B cell (primary cell): ENCODE measurements at regions of chr2 and their contacts with region 1.

Region 1: GRCh38 chr2:130342533-130343275 is at the start of gene IMP4:
- DNase-seq: peak; percentile 98
- ATAC-seq: peak; percentile 83
- H3K4me3 ChIP-seq: peak within 1 kb of the TSS; percentile 87 to 99 (median 89)
- H3K4me3 Mint-ChIP-seq: peak within 1 kb of the TSS; percentile 100
- H3K27ac ChIP-seq: peak within 1 kb of the TSS; percentile 90 to 97
- H3K27ac Mint-ChIP-seq: peak within 1 kb of the TSS; percentile 99
- H3K4me1 ChIP-seq: peaks cover 12 to 30% of the 10 kb centered on the region in 2 donors
- H3K4me1 Mint-ChIP-seq: peaks cover 53% of the 10 kb centered on the region
- H3K27me3 ChIP-seq: no peaks in the 10 kb centered on the region
- H3K27me3 Mint-ChIP-seq: no peaks in the 10 kb centered on the region
- CTCF ChIP-seq: peak; percentile 53
- total RNA-seq, gene IMP4: 91.5 and 102 TPM in 2 replicates

Region 2: GRCh38 chr2:130154773-130155765 is 187.6 kb before region 1 on chr2:
- CTCF ChIA-PET with region 1: interaction called, 8 read pairs
- POLR2A ChIA-PET with region 1: no interaction called
- intact Hi-C with region 1: loop called (anchors 1 kb)
- DNase-seq: no peak
- ATAC-seq: no peak
- H3K4me3 ChIP-seq: no peak overlapping the region
- H3K4me3 Mint-ChIP-seq: no peak overlapping the region
- H3K27ac ChIP-seq: no peak overlapping the region
- H3K27ac Mint-ChIP-seq: peak overlapping the region; percentile 46
- H3K4me1 ChIP-seq: peaks cover 24 to 32% of the 10 kb centered on the region in 2 donors
- H3K4me1 Mint-ChIP-seq: peaks cover 30% of the 10 kb centered on the region
- H3K27me3 ChIP-seq: no peaks in the 10 kb centered on the region
- H3K27me3 Mint-ChIP-seq: no peaks in the 10 kb centered on the region
- CTCF ChIP-seq: no peak

Region 3: GRCh38 chr2:130332271-130333073 is 10.2 kb before region 1 on chr2:
- CTCF ChIA-PET with region 1: interaction called, 40 read pairs
- POLR2A ChIA-PET with region 1: no interaction called
- intact Hi-C with region 1: no loop called
- DNase-seq: peak; percentile 75
- ATAC-seq: peak; percentile 86
- H3K4me3 ChIP-seq: peak overlapping the region in 1 of 5 experiments; percentile 4
- H3K4me3 Mint-ChIP-seq: peak overlapping the region; percentile 26
- H3K27ac ChIP-seq: no peak overlapping the region
- H3K27ac Mint-ChIP-seq: no peak overlapping the region
- H3K4me1 ChIP-seq: peaks cover 4 to 7% of the 10 kb centered on the region in 2 donors
- H3K4me1 Mint-ChIP-seq: peaks cover 6% of the 10 kb centered on the region
- H3K27me3 ChIP-seq: peaks cover 0 to 16% (median 4%) of the 10 kb centered on the region in 4 experiments
- H3K27me3 Mint-ChIP-seq: peaks cover 25% of the 10 kb centered on the region
- CTCF ChIP-seq: peak; percentile 98

Region 4: GRCh38 chr2:130372055-130372832 is 29.5 kb after region 1 on chr2:
- CTCF ChIA-PET with region 1: interaction called, 61 read pairs
- POLR2A ChIA-PET with region 1: interaction called, 27 read pairs
- intact Hi-C with region 1: loop called (anchors 1 kb)
- DNase-seq: peak; percentile 89
- ATAC-seq: peak; percentile 82
- H3K4me3 ChIP-seq: peak overlapping the region; percentile 66 to 82 (median 75)
- H3K4me3 Mint-ChIP-seq: peak overlapping the region; percentile 99
- H3K27ac ChIP-seq: peak overlapping the region; percentile 48 to 76
- H3K27ac Mint-ChIP-seq: peak overlapping the region; percentile 99
- H3K4me1 ChIP-seq: peaks cover 32 to 62% of the 10 kb centered on the region in 2 donors
- H3K4me1 Mint-ChIP-seq: peaks cover 65% of the 10 kb centered on the region
- H3K27me3 ChIP-seq: no peaks in the 10 kb centered on the region
- H3K27me3 Mint-ChIP-seq: no peaks in the 10 kb centered on the region
- CTCF ChIP-seq: peak; percentile 81

Region 5: DNA sequence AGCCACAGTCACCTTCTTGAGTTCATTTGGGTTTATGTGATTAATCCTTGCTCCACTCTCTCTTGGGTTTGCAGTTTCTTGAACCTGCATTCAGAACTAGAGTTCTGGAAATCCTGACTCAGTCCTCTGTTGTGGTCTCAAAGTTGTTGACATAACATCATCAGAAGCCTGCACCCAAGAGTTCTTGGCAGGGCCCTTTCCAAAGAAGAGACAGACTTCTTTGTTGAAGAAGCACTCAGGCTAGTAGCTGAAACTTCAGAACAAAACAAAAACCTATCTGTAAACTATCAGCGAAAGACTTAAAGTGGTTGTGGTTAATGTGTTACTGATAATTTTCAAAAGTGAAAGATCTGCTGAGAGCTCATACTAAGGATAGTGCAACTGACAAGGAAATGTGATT is 629.7 kb after region 1 on chr2:
- CTCF ChIA-PET with region 1: no interaction called
- POLR2A ChIA-PET with region 1: no interaction called
- intact Hi-C with region 1: no loop called
- DNase-seq: no peak
- ATAC-seq: no peak
- H3K4me3 ChIP-seq: no peak overlapping the region
- H3K4me3 Mint-ChIP-seq: no peak overlapping the region
- H3K27ac ChIP-seq: no peak overlapping the region
- H3K27ac Mint-ChIP-seq: no peak overlapping the region
- H3K4me1 ChIP-seq: no peaks in the 10 kb centered on the region
- H3K4me1 Mint-ChIP-seq: no peaks in the 10 kb centered on the region
- H3K27me3 ChIP-seq: no peaks in the 10 kb centered on the region
- H3K27me3 Mint-ChIP-seq: peaks cover 13% of the 10 kb centered on the region
- CTCF ChIP-seq: no peak

Region 6: GRCh38 chr2:131105156-131105949 is 762.6 kb after region 1 on chr2 and contains the start of gene PLEKHB2:
- CTCF ChIA-PET with region 1: no interaction called
- POLR2A ChIA-PET with region 1: no interaction called
- intact Hi-C with region 1: loop called (anchors 10 kb)
- DNase-seq: peak; percentile 95
- ATAC-seq: peak; percentile 88
- H3K4me3 ChIP-seq: peak within 1 kb of the TSS; percentile 47 to 99 (median 91)
- H3K4me3 Mint-ChIP-seq: peak within 1 kb of the TSS; percentile 97
- H3K27ac ChIP-seq: peak within 1 kb of the TSS; percentile 80 to 91
- H3K27ac Mint-ChIP-seq: peak within 1 kb of the TSS; percentile 93
- H3K4me1 ChIP-seq: peaks cover 19 to 20% of the 10 kb centered on the region in 2 donors
- H3K4me1 Mint-ChIP-seq: peaks cover 44% of the 10 kb centered on the region
- H3K27me3 ChIP-seq: no peaks in the 10 kb centered on the region
- H3K27me3 Mint-ChIP-seq: no peaks in the 10 kb centered on the region
- CTCF ChIP-seq: no peak
- total RNA-seq, gene PLEKHB2: 39.5 and 42.1 TPM in 2 replicates